ENCODE measurements at regions of chr13 and their contacts with region 1.

Region 1: GRCh38 chr13:30465585-30466357 is at the start of gene HMGB1:
- DNase-seq: peak; percentile 96 to 99
- H3K4me3 ChIP-seq: peak within 1 kb of the TSS; percentile 98 to 100
- H3K27ac ChIP-seq: peak within 1 kb of the TSS; percentile 98 to 100
- H3K4me1 ChIP-seq: peaks cover 4 to 24% of the 10 kb centered on the region in 2 donors
- H3K27me3 ChIP-seq: no peaks in the 10 kb centered on the region
- CTCF ChIP-seq: no peak
- total RNA-seq, gene HMGB1: 135 TPM

Region 2: DNA sequence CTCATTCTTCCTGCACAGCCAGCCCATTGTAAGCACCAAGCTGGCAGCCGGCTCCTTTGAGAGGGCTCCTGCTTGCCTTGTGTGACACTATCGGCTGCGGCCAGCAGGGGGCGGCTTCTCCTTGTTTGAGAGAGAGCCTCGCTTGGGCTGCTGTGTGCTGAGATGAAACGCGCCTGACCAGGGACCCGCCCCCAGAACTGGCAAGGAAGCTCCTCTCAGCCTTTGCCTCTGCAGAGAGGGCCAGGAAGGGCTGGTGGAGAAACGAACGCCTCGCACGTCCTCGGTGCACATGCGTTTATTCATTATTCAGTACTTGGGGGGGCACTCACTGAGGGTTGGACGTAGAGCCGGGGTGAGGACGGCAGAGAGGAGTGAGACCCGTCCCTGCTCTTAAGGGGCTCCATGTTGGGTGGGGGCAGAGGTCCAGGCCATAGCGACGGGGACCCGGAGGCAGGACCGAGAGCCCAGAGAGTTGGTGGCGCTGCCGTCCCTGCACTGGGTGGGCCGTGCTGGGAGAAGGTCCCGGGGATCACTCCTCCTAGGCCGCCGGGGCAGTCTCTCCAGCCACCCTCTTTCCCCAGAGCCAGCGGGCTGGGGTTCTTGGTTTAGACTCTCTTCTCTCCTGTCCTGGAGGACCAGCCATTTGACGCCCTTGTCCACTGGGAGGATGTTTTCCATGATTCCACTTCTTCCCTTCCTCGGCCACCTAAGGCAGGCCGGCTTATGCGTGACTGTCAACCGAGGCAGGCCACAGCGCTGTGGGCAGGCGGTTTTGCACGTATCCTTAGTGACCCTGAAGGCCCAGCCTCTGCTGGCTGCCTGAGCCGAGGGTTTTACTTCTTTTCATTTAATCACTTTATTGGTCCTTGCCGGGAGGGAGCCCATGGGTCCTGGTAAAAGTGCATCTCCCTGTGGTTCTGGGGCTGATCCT is 332.9 kb before region 1 on chr13:
- intact Hi-C with region 1: loop called (anchors 2 kb)
- DNase-seq: peak; percentile 87 to 98
- H3K4me3 ChIP-seq: peak overlapping the region in 1 of 2 donors; percentile 10
- H3K27ac ChIP-seq: no peak overlapping the region
- H3K4me1 ChIP-seq: no peaks in the 10 kb centered on the region
- H3K27me3 ChIP-seq: no peaks in the 10 kb centered on the region
- CTCF ChIP-seq: peak; percentile 83 to 95 (median 84)

Region 3: GRCh38 chr13:30158774-30159445 is 306.9 kb before region 1 on chr13:
- intact Hi-C with region 1: no loop called
- DNase-seq: no peak
- H3K4me3 ChIP-seq: no peak overlapping the region
- H3K27ac ChIP-seq: no peak overlapping the region
- H3K4me1 ChIP-seq: no peaks in the 10 kb centered on the region
- H3K27me3 ChIP-seq: no peaks in the 10 kb centered on the region
- CTCF ChIP-seq: peak in 1 of 3 experiments; percentile 8

Region 4: DNA sequence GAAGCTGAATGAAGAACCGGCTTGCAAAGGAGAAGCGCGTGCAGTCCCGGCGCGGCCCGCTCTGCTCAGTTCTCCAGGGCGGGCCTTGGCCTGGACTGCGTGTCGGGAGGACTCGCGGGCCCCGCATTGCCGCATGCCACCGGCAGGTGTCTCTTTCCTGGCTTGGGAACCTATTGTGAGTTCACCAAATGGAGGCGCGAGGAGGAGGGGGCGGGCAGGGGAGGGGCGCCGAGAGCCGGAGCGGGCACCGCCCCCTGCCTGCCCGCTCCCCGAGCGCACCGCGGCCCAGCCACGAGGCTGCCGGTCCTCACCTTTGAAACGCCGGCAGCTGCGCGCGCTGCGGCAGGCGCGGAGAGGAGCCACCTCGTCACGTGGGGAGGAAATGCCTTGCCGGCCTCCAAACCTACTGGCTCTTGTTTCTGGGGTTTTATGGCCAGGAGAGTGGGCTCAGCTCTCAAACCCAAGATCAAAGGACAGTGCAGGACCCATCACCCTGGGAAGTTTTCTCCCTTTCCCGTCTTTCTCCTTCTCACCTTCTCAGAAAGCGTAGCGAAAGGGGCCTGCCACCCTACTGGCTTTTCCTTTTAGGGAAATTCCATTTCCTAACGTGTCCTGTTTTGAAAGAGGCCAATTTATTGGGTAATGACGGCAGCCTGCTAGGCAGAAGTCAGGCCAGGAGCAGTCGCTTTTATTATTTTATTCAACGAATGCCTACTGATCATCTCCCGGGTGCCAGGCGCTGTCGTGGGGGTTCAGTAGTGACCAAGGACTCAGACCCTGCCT is 57.3 kb before region 1 on chr13:
- intact Hi-C with region 1: loop called (anchors 1 kb)
- DNase-seq: peak; percentile 71 to 97
- H3K4me3 ChIP-seq: peak overlapping the region; percentile 39 to 55
- H3K27ac ChIP-seq: peak overlapping the region; percentile 95 to 96
- H3K4me1 ChIP-seq: peaks cover 5 to 21% of the 10 kb centered on the region in 2 donors
- H3K27me3 ChIP-seq: no peaks in the 10 kb centered on the region
- CTCF ChIP-seq: peak; percentile 75 to 91 (median 90)

Region 5: GRCh38 chr13:30572859-30573275 is 107.1 kb after region 1 on chr13:
- intact Hi-C with region 1: loop called (anchors 5 kb)
- DNase-seq: no peak
- H3K4me3 ChIP-seq: peak overlapping the region; percentile 46 to 48
- H3K27ac ChIP-seq: peak overlapping the region in 1 of 2 donors; percentile 38
- H3K4me1 ChIP-seq: peaks cover 0 to 6% of the 10 kb centered on the region in 2 donors
- H3K27me3 ChIP-seq: no peaks in the 10 kb centered on the region
- CTCF ChIP-seq: peak in 1 of 3 experiments; percentile 43

Region 6: DNA sequence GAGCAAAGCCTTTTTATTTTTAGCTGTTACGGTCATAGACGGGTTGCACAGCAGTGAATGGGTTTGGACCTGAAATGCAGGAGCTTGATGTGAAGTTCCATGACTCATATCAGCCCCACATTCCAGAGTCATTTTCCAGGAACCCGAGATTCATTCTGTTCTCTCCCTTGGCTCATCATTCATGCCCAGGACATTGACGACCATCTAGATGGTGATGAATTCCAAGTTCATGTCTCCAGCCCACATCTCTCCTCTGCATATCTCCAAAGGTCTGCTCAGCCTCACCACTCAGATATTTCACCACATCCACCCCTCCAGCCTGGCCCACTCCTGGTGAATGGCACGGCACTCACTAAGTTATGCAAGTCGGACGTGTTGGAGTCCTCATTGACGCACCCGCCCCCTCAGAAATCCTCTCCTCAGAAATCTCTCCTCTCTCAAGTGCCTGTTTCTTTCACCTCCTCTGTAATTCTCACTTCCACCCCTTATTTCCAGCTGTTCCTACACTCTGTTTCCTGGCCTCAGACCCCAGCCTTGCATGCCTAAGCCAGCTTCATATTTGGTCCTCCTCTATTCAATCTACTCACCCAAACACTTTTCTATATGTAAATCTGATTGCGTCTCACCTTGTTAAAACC is 352.7 kb after region 1 on chr13:
- intact Hi-C with region 1: loop called (anchors 5 kb)
- DNase-seq: peak in 1 of 2 donors; percentile 70
- H3K4me3 ChIP-seq: no peak overlapping the region
- H3K27ac ChIP-seq: no peak overlapping the region
- H3K4me1 ChIP-seq: no peaks in the 10 kb centered on the region
- H3K27me3 ChIP-seq: no peaks in the 10 kb centered on the region
- CTCF ChIP-seq: no peak

Region 7: DNA sequence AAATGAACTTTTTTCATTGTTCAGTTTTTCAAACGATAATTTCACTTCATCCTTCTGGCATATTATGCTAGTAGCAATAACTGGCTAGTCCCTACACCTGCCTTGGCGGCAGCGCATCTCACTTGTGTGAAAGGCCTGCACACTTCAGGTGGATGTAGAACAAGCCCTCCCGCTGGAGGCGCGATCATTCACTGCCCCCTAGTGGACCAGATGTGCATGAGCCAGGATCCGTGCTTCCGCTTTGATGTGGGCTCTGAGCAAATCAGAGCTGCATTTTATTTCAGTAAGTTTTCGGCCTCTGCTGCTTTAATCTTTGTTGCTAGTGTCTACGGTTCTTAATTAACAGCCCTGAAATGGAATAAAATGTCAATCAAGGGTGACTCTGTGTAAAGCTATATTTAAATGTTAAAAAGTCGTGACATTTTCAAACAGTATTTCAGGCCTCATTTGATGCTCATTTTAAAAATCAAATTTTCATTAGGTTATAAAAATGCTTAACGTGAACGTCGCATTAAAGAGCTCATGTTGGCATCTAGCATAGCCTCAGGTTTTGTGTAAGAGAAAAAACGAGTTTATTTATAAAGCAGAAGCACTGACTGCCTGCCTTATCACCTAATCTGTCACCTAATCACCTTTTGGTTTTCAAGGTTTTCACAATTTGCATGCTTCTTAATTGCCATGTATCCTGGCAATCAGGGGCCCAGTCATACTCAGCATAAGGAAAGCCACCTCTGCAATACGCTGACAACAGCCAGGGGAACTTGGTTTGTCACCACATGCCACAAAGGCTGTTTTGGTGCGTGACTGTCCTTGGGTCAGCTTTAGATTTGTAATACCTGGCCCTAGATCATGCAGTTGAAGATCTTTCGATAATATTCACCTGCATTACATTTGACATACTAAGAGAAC is 578.9 kb after region 1 on chr13:
- intact Hi-C with region 1: loop called (anchors 5 kb)
- DNase-seq: peak; percentile 28 to 88
- H3K4me3 ChIP-seq: no peak overlapping the region
- H3K27ac ChIP-seq: peak overlapping the region in 1 of 2 donors; percentile 23
- H3K4me1 ChIP-seq: peaks cover 0 to 2% of the 10 kb centered on the region in 2 donors
- H3K27me3 ChIP-seq: no peaks in the 10 kb centered on the region
- CTCF ChIP-seq: peak; percentile 68 to 96 (median 89)

Region 8: GRCh38 chr13:32001185-32001768 is 1535.5 kb after region 1 on chr13:
- intact Hi-C with region 1: no loop called
- DNase-seq: no peak
- H3K4me3 ChIP-seq: no peak overlapping the region
- H3K27ac ChIP-seq: no peak overlapping the region
- H3K4me1 ChIP-seq: peaks cover 0 to 4% of the 10 kb centered on the region in 2 donors
- H3K27me3 ChIP-seq: no peaks in the 10 kb centered on the region
- CTCF ChIP-seq: peak; percentile 32 to 55 (median 42)